ENCODE measurements at regions of chr5 and their contacts with region 1.

Region 1: GRCh38 chr5:10590226-10590999 is 26.5 kb downstream of the ANKRD33B start:
- DNase-seq: peak; percentile 46 to 53
- H3K4me3 ChIP-seq: no peak overlapping the region
- H3K27ac ChIP-seq: no peak overlapping the region
- H3K4me1 ChIP-seq: peaks cover 4 to 14% (median 5%) of the 10 kb centered on the region in 4 experiments
- H3K27me3 ChIP-seq: no peaks in the 10 kb centered on the region
- CTCF ChIP-seq: no peak
- EP300 ChIP-seq: no peak
- POLR2A ChIP-seq: no peak
- RAD21 ChIP-seq: no peak

Region 2: GRCh38 chr5:10577371-10578292 is 12.8 kb before region 1 on chr5:
- CTCF ChIA-PET with region 1: interaction called, 10 read pairs
- POLR2A ChIA-PET with region 1: interaction called, 3 read pairs
- DNase-seq: no peak
- H3K4me3 ChIP-seq: no peak overlapping the region
- H3K27ac ChIP-seq: no peak overlapping the region
- H3K4me1 ChIP-seq: peaks cover 0 to 5% (median 3%) of the 10 kb centered on the region in 4 experiments; a peak in 4 of 7 replicates
- H3K27me3 ChIP-seq: no peaks in the 10 kb centered on the region
- CTCF ChIP-seq: no peak
- EP300 ChIP-seq: no peak
- POLR2A ChIP-seq: no peak
- RAD21 ChIP-seq: no peak

Region 3: GRCh38 chr5:10607666-10608073 is 17.3 kb after region 1 on chr5:
- CTCF ChIA-PET with region 1: interaction called, 17 read pairs
- POLR2A ChIA-PET with region 1: interaction called, 3 read pairs
- DNase-seq: no peak
- H3K4me3 ChIP-seq: no peak overlapping the region; a peak in 1 of 8 replicates
- H3K27ac ChIP-seq: no peak overlapping the region
- H3K4me1 ChIP-seq: peaks cover 4 to 31% (median 15%) of the 10 kb centered on the region in 4 experiments; a peak in 6 of 7 replicates
- H3K27me3 ChIP-seq: no peaks in the 10 kb centered on the region
- CTCF ChIP-seq: peak in 2 of 3 experiments; percentile 7 to 35; a peak in 2 of 4 replicates
- EP300 ChIP-seq: no peak
- POLR2A ChIP-seq: no peak
- RAD21 ChIP-seq: peak in 1 of 2 experiments; percentile 37; a peak in 3 of 4 replicates

Measured in H1 (cell line).